Tibial artery (tissue), 4 donors: ENCODE measurements at regions of chr17 and their contacts with region 1.

Region 1: DNA sequence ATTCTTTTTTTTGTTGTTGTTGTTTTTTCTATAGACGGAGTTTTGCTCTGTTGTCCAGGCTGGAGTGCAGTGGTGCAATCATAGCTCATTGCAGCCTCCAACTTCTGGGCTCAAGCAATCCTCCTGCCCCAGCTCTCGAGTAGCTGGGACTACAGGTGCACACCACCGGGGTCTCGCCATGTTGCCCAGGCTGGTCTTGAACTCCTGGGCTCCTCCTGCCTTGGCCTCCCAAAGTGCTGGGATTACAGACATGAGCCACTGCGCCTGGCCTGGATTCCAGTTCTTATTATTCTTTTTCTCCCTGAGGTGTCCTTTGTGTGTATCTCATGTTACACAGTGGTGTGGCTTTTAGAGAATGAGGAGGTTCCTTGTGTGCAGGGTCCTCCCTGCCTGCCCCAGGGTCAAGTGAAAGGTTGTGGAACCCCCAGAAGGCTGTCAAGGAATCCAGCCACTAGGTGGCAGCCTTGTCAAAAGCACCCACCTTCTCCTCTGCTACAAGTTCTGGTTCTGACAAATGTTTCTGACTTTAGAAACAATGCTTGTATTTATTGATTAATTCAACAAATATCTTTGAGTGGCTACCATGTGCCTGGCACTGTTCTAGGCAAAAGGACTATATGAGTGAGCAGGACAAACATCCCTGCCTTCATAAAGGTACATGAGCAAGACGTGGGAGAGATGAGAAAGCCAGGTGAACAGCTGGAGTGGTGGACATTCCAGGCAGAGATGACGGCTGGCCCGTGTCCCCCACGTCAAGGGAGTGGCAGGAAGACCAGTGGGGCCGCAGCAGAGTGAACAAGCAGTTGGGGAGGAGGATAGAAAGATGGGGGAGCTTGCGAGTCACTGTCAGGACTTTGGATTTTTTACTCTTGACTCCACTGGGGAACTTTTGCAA is 112.4 kb downstream of the SPECC1 start:
- DNase-seq: peak; percentile 58 to 72
- H3K4me3 ChIP-seq: peak overlapping the region in 1 of 2 donors; percentile 12
- H3K27ac ChIP-seq: peak overlapping the region; percentile 20 to 31
- H3K4me1 ChIP-seq: peaks cover 0 to 27% (median 11%) of the 10 kb centered on the region in 4 donors
- H3K27me3 ChIP-seq: no peaks in the 10 kb centered on the region
- CTCF ChIP-seq: peak; percentile 82 to 85

Region 2: DNA sequence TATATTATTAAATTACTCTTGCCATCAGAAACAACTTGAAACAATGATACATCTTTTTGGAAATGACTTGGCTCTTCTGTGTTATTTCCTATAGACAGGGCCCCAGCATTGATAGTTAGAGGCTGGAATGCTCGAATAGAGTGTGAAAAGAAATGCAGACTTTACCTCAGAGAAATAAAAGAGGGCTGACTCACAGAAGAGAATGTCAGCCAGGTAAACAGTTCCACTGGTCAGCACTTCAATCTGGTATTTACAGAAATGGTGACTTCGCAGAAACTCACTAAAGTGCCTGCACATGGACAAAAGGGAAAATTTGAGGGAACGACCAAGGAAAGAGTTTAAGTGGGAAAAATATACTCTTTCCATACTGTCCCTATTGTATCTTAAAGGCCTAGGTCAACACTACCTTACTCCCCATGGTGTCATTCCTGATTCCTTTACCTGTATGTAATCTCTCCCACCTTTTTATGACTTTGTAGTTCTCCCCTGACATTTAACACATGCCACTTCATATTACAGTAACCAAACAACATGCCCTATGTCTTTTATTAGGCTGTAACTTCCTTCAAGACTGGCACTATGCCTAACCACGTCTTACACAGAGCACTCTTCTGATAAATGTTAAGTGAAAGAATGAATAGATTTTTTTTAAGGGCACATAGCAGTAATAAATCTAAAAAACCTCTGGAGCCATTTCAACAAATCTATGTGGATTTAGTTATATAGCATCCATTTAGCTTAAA is 180.7 kb before region 1 on chr17:
- intact Hi-C with region 1: no loop called
- DNase-seq: no peak
- H3K4me3 ChIP-seq: no peak overlapping the region
- H3K27ac ChIP-seq: no peak overlapping the region
- H3K4me1 ChIP-seq: peaks cover 0 to 7% (median 3%) of the 10 kb centered on the region in 4 donors
- H3K27me3 ChIP-seq: no peaks in the 10 kb centered on the region
- CTCF ChIP-seq: no peak

Region 3: DNA sequence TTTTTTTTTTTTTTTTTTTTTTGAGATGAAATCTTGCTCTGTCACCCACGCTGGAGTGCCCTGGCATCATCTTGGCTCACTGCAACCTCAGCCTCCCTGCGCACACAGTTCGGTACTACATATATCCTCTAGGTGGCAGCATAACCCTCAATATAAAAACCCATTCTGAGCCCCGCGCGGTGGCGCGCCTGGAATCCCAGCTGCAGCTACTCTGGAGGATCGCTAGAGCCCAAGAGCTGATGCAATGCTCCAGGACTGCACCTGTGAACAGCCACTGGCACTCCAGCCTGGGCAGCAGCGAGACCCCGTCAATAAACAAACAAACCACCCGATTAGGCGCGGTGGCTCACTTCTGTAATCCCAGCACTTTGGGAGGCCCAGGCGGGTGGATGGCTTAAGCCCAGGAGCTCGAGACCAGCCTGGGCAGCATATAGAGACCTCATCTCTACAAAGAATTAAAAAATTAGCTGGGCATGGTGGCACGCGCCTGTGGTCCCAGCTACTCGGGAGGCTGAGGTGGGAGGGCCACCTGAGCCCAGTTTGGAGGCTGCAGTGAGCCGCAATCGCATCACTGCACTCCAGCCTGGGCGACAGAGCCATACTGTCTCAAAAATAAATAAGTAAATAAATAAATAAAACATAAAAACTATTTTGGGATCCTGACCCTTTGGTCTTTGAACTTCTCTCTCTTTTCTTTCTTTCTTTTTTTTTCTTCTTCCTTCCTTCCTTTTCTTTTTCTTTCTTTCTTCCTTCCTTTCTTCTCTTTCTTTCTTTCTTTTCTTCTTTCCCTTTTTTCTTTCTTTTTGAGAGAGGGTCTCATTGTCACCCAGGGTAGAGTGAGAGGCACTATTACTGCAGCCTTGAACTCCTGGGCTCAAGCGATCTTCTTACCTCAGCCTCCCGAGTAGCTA is 128.5 kb before region 1 on chr17:
- intact Hi-C with region 1: loop called (anchors 2 kb)
- DNase-seq: peak; percentile 91 to 94
- H3K4me3 ChIP-seq: no peak overlapping the region
- H3K27ac ChIP-seq: no peak overlapping the region
- H3K4me1 ChIP-seq: peaks cover 0 to 4% (median 2%) of the 10 kb centered on the region in 4 donors
- H3K27me3 ChIP-seq: no peaks in the 10 kb centered on the region
- CTCF ChIP-seq: peak; percentile 66 to 89

Region 4: DNA sequence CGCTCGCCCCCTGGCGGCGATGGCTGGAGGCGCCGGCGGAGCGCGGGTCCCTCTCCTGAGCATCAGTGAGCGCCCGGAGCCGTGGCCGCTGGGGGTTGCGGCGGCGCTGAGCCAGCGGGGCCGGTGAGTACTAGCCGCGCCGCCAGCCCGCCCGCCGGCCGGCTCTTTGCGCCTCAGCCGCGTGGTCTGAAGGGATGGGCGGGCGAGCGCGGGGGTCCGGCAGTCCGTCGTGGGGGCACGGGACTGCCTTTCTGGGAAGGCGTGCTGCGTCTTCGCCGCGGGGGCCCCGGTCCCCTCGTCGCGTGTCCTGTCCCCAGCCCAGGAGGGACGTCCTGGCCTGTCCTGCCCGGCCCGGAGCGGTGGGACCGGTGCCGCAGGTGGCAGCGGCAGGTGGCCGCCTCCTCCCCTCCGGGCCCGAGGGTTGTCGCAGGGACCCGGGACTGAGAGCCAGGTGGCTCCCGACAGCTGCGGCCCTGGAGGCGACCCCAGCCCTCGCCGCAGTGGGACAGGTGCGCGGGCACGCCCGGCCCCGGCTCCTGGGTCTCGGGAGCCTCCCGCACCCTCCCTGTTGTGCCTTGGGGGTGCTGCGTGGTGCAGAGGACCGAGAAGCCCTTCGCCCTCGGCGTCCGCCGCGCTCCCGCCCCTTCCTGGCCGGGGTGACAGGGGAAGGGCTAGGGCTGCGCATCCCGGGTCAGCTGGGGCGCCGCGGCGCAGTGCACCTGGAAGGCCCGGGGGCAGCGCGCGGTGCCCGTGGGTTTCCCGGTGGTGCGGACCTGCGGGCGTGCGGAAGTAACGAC is 112.1 kb before region 1 on chr17 and contains the start of gene SPECC1:
- intact Hi-C with region 1: loop called (anchors 5 kb)
- DNase-seq: peak; percentile 84 to 91
- H3K4me3 ChIP-seq: peak within 1 kb of the TSS; percentile 67 to 92
- H3K27ac ChIP-seq: peak within 1 kb of the TSS; percentile 87 to 94
- H3K4me1 ChIP-seq: peaks cover 0 to 19% (median 7%) of the 10 kb centered on the region in 4 donors
- H3K27me3 ChIP-seq: no peaks in the 10 kb centered on the region
- CTCF ChIP-seq: peak; percentile 99 to 100

Region 5: GRCh38 chr17:20159406-20160075 is 37.9 kb after region 1 on chr17:
- intact Hi-C with region 1: no loop called
- DNase-seq: no peak
- H3K4me3 ChIP-seq: no peak overlapping the region
- H3K27ac ChIP-seq: no peak overlapping the region
- H3K4me1 ChIP-seq: peaks cover 0 to 23% (median 10%) of the 10 kb centered on the region in 4 donors
- H3K27me3 ChIP-seq: no peaks in the 10 kb centered on the region
- CTCF ChIP-seq: no peak

Region 6: DNA sequence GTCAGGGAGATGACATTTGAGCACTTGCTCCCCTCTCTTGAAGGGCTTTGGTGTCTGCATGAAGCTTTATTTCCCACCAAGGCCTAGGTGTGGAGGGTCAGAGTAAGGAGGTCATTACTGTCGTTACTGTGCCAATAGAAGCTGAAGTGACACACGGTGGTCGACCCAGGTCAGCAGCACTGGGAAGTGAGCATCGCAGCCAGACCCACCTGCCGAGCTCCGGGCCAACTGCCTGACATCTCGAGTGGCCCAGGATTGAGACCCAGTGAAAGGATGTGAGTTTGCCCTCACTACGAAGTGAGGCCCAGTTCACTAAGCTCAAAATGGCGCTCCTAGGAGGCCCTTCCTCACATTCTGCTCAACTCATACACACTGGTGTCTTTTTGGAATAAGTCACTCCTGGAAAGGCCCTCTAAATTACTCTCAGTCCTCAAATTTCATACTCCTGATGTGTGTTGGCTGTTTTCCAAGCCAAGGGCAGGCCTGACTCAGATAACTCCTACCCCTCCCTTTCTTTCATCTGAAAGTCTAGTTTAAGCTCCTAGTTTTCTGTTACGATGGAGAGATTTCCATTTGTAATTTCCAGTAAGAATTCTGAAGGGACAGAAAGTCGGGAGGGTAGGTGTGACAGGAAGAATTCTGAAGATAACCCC is 145.3 kb after region 1 on chr17:
- intact Hi-C with region 1: no loop called
- DNase-seq: no peak
- H3K4me3 ChIP-seq: no peak overlapping the region
- H3K27ac ChIP-seq: peak overlapping the region; percentile 68 to 72
- H3K4me1 ChIP-seq: peaks cover 0 to 88% (median 40%) of the 10 kb centered on the region in 4 donors
- H3K27me3 ChIP-seq: no peaks in the 10 kb centered on the region
- CTCF ChIP-seq: no peak

Region 7: GRCh38 chr17:20315821-20316220 is 194.2 kb after region 1 on chr17:
- intact Hi-C with region 1: loop called (anchors 2 kb)
- DNase-seq: no peak
- H3K4me3 ChIP-seq: no peak overlapping the region
- H3K27ac ChIP-seq: no peak overlapping the region
- H3K4me1 ChIP-seq: peaks cover 0 to 8% (median 3%) of the 10 kb centered on the region in 4 donors
- H3K27me3 ChIP-seq: no peaks in the 10 kb centered on the region
- CTCF ChIP-seq: no peak